Activated CD4-positive, alpha-beta T cell treated with anti-CD3 and anti-CD28 coated beads for 36 hours (primary cell): ENCODE measurements at regions of chr17 and their contacts with region 1.

Region 1: GRCh38 chr17:46139432-46140210 is 53.6 kb downstream of the KANSL1 start:
- DNase-seq: no peak
- ATAC-seq: no peak
- H3K4me3 Mint-ChIP-seq: no peak overlapping the region
- H3K27ac Mint-ChIP-seq: no peak overlapping the region
- H3K4me1 Mint-ChIP-seq: peaks cover 91% of the 10 kb centered on the region
- H3K27me3 Mint-ChIP-seq: no peaks in the 10 kb centered on the region

Region 2: GRCh38 chr17:46063240-46063639 is 76.4 kb before region 1 on chr17:
- CTCF ChIA-PET with region 1: no interaction called
- POLR2A ChIA-PET with region 1: no interaction called
- intact Hi-C with region 1: no loop called
- DNase-seq: no peak
- ATAC-seq: no peak
- H3K4me3 Mint-ChIP-seq: no peak overlapping the region
- H3K27ac Mint-ChIP-seq: no peak overlapping the region
- H3K4me1 Mint-ChIP-seq: peaks cover 26% of the 10 kb centered on the region
- H3K27me3 Mint-ChIP-seq: no peaks in the 10 kb centered on the region

Region 3: GRCh38 chr17:46082257-46082656 is 57.4 kb before region 1 on chr17:
- CTCF ChIA-PET with region 1: interaction called, 5 read pairs
- POLR2A ChIA-PET with region 1: no interaction called
- intact Hi-C with region 1: loop called in 1 of 2 experiments (anchors 10 kb)
- DNase-seq: no peak
- ATAC-seq: no peak
- H3K4me3 Mint-ChIP-seq: no peak overlapping the region
- H3K27ac Mint-ChIP-seq: peak overlapping the region; percentile 27
- H3K4me1 Mint-ChIP-seq: peaks cover 69% of the 10 kb centered on the region
- H3K27me3 Mint-ChIP-seq: no peaks in the 10 kb centered on the region

Region 4: GRCh38 chr17:46100590-46100989 is 39.0 kb before region 1 on chr17:
- CTCF ChIA-PET with region 1: interaction called, 5 read pairs
- POLR2A ChIA-PET with region 1: no interaction called
- intact Hi-C with region 1: loop called (anchors 2 to 5 kb)
- DNase-seq: no peak
- ATAC-seq: no peak
- H3K4me3 Mint-ChIP-seq: no peak overlapping the region
- H3K27ac Mint-ChIP-seq: peak overlapping the region; percentile 80
- H3K4me1 Mint-ChIP-seq: peaks cover 71% of the 10 kb centered on the region
- H3K27me3 Mint-ChIP-seq: no peaks in the 10 kb centered on the region

Region 5: GRCh38 chr17:46108550-46109110 is 31.0 kb before region 1 on chr17:
- CTCF ChIA-PET with region 1: no interaction called
- POLR2A ChIA-PET with region 1: no interaction called
- intact Hi-C with region 1: loop called (anchors 2 to 5 kb)
- DNase-seq: no peak
- ATAC-seq: peak; percentile 47
- H3K4me3 Mint-ChIP-seq: no peak overlapping the region
- H3K27ac Mint-ChIP-seq: peak overlapping the region; percentile 70
- H3K4me1 Mint-ChIP-seq: peaks cover 88% of the 10 kb centered on the region
- H3K27me3 Mint-ChIP-seq: no peaks in the 10 kb centered on the region

Region 6: DNA sequence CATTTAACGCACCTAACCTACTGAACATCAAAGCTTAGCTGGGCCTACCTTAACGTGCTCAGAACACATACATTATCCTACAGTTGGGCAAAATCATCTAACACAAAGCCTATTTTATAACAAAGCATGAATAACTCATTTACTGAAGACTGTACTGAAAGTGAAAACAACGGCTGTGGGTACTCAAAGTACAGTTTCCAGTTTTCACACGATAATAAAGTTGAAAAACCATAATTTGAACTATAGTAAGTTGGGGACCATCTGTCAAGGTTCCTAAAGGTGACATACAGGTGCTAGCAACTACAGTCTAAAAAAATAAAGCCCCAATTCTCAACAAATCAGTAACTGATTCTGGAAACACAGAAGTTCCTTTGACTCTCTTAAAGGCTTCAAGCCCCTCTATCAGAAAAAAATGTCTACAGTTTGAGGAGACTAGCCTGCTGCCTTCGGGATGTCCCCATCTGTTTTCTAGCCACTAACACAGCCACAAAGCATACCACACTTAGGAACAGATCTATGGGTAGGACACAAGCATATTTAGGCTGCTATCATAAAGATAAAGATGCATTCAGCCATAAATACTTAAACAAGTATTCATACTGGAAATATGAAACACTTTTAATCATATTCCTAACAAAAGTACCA is 17.7 kb before region 1 on chr17:
- CTCF ChIA-PET with region 1: interaction called, 5 read pairs
- POLR2A ChIA-PET with region 1: interaction called, 5 read pairs
- intact Hi-C with region 1: loop called in 1 of 2 experiments (anchors 2 kb)
- DNase-seq: no peak
- ATAC-seq: peak; percentile 66
- H3K4me3 Mint-ChIP-seq: peak overlapping the region; percentile 13
- H3K27ac Mint-ChIP-seq: peak overlapping the region; percentile 23
- H3K4me1 Mint-ChIP-seq: peaks cover 81% of the 10 kb centered on the region
- H3K27me3 Mint-ChIP-seq: no peaks in the 10 kb centered on the region

Region 7: GRCh38 chr17:46154151-46154816 is 14.7 kb after region 1 on chr17:
- CTCF ChIA-PET with region 1: interaction called, 18 read pairs
- POLR2A ChIA-PET with region 1: no interaction called
- intact Hi-C with region 1: loop called (anchors 2 kb)
- DNase-seq: peak; percentile 40
- ATAC-seq: peak; percentile 16
- H3K4me3 Mint-ChIP-seq: peak overlapping the region; percentile 46
- H3K27ac Mint-ChIP-seq: peak overlapping the region; percentile 52
- H3K4me1 Mint-ChIP-seq: peaks cover 90% of the 10 kb centered on the region
- H3K27me3 Mint-ChIP-seq: no peaks in the 10 kb centered on the region